ENCODE measurements at regions of chr6 and their contacts with region 1.

Region 1: DNA sequence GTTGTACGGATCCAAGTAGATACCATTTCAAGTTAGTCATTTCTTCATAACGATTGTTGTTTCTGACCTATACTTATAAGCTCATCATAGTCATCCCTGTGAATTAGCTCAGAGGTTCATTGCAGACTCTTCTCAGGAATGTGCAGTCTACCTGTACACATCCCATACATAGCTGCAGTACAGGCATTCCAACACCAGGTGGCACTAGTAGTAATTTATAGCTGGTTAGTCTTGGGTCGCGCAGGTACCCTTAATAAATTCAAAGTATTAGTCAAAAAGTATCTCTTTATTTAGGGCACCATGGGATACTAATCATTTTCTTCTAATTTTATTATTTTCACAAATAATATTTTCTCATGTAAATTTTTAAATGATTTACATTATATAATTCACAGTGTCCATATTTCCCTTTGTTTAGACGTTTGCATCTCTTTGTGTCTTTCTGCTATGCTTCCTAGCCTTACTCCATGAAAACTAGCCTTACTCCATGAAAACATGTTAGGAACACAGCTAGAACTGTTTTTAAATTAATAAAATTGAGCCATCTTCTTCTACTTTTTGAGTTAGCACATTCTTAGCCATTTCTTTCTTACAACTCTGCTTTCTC is 128.6 kb upstream of the FAM83B start:
- DNase-seq: peak; percentile 94
- ATAC-seq: peak; percentile 87
- H3K4me3 ChIP-seq: no peak overlapping the region
- H3K27ac ChIP-seq: no peak overlapping the region
- H3K4me1 ChIP-seq: peaks cover 12% of the 10 kb centered on the region
- H3K27me3 ChIP-seq: no peaks in the 10 kb centered on the region
- CTCF ChIP-seq: peak; percentile 87

Region 2: GRCh38 chr6:54737247-54737646 is 19.3 kb after region 1 on chr6:
- CTCF ChIA-PET with region 1: no interaction called
- POLR2A ChIA-PET with region 1: no interaction called
- intact Hi-C with region 1: no loop called
- DNase-seq: no peak
- ATAC-seq: no peak
- H3K4me3 ChIP-seq: no peak overlapping the region
- H3K27ac ChIP-seq: no peak overlapping the region
- H3K4me1 ChIP-seq: no peaks in the 10 kb centered on the region
- H3K27me3 ChIP-seq: no peaks in the 10 kb centered on the region
- CTCF ChIP-seq: peak; percentile 59

Region 3: GRCh38 chr6:55239099-55239498 is 521.1 kb after region 1 on chr6:
- CTCF ChIA-PET with region 1: no interaction called
- POLR2A ChIA-PET with region 1: no interaction called
- intact Hi-C with region 1: loop called (anchors 2 kb)
- DNase-seq: peak; percentile 16
- ATAC-seq: no peak
- H3K4me3 ChIP-seq: no peak overlapping the region
- H3K27ac ChIP-seq: no peak overlapping the region
- H3K4me1 ChIP-seq: no peaks in the 10 kb centered on the region
- H3K27me3 ChIP-seq: no peaks in the 10 kb centered on the region
- CTCF ChIP-seq: no peak